H1 (cell line): ENCODE measurements at regions of chr19 and their contacts with region 1.

Region 1: DNA sequence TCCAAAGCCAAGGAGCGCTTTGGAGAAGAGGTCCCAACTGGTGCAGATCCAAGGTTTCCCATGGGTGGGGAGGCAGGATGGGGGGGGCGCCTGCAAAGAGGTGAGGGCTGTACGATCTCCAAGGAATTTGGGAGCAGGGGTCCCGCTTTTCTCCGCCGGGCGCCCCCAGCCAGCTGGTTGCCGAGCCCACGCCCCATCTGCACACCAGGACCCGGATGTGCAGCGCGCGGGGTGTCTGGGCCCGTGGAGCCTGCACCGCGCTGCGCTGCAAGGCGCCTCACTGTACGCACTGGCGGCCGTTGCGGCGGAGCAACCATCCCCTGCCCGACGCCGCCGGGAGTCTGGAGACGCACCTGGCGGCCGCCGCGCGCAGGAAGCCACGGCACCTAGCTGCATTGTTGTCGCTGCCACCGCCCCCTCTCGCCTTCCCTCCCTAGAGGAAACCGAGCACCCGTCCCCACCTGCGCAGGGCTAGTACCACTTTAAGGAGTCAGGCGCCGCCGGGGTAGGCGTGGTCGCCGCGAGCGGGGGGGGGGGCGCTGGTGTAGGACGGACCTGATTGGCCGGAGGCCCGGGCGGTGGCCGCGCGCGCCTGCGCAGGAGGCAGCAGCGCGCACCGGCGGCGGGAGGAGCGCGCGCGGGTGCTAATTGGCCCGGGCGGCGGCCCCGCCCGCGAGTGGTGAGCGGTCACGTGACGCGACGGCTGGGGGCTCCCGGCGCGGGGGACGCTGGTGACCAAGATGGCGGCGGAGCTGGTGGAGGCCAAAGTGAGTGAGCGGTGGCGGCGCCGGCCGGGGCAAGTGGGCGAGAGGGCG is at the start of gene PIAS4:
- DNase-seq: peak; percentile 85 to 93
- H3K4me3 ChIP-seq: peak within 1 kb of the TSS; percentile 69 to 99 (median 92)
- H3K27ac ChIP-seq: peak within 1 kb of the TSS; percentile 83; the same call in 1 of the 2 replicates
- H3K4me1 ChIP-seq: peaks cover 2 to 12% (median 5%) of the 10 kb centered on the region in 4 experiments
- H3K27me3 ChIP-seq: no peaks in the 10 kb centered on the region
- CTCF ChIP-seq: no peak
- EP300 ChIP-seq: peak in 1 of 2 experiments; percentile 16; a peak in 1 of 3 replicates
- POLR2A ChIP-seq: peak in 1 of 2 experiments; percentile 75; a peak in 1 of 3 replicates
- RAD21 ChIP-seq: no peak; a peak in 1 of 4 replicates
- total RNA-seq, gene PIAS4: 41.4 and 51.4 TPM in 2 replicates

Region 2: GRCh38 chr19:3995627-3996026 is 11.6 kb before region 1 on chr19:
- CTCF ChIA-PET with region 1: interaction called, 21 read pairs
- POLR2A ChIA-PET with region 1: interaction called, 23 read pairs
- DNase-seq: no peak
- H3K4me3 ChIP-seq: no peak overlapping the region
- H3K27ac ChIP-seq: no peak overlapping the region
- H3K4me1 ChIP-seq: no peaks in the 10 kb centered on the region
- H3K27me3 ChIP-seq: no peaks in the 10 kb centered on the region
- CTCF ChIP-seq: no peak
- EP300 ChIP-seq: no peak
- POLR2A ChIP-seq: no peak
- RAD21 ChIP-seq: no peak